Activated B cell treated with CpG ODN at 0.5 μM for 24 hours (primary cell): ENCODE measurements at regions of chr1 and their contacts with region 1.

Region 1: GRCh38 chr1:32286763-32287162 is 5.1 kb upstream of the HDAC1 start:
- DNase-seq: no peak
- ATAC-seq: no peak
- H3K4me3 Mint-ChIP-seq: no peak overlapping the region
- H3K27ac Mint-ChIP-seq: no peak overlapping the region
- H3K4me1 Mint-ChIP-seq: peaks cover 7% of the 10 kb centered on the region
- H3K27me3 Mint-ChIP-seq: no peaks in the 10 kb centered on the region
- CTCF ChIP-seq: no peak

Region 2: DNA sequence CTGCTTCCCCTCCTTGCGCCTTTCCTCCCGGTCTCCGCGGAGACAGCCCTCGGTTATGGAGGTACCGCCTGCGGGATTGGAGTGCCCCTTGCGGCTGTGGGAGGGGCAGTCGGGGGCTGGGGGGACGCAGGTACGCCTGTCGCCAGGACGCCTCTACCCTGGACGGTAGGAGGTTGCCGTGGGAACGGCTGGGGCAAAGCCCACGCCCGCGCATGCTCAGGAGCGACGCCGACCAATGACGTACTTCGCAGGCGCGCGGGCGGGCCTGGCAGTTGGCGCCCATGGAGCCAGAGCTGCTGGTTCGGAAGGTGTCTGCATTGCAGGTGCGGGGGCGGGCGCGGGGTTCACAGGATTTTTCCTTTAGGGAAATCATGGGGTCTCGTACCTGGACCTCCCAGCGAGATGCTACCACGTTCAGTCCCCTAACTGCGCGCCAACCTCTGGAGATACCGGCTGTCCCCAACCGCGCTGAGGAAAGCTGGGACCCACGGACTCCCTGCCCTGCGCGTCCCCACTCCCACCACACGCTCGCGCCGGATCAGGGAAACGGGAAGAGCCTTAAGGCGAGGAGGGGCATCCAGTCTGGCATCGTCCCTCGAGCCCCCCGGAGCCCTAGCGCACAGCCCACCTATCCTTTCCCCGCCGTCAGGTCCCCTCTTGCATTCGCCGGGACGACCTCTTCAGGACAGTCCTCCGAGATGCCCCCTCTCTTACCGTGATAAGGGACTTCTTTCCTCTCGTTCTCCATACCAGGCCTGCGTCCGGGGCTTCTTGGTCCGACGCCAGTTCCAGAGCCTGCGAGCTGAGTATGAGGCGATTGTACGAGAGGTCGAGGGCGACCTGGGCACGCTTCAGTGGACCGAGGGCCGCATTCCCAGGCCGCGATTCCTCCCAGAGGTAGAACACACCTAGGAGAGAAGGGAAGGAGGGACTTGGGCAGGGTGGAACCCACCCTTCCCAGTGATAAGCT is 81.1 kb before region 1 on chr1 and contains the start of gene IQCC:
- CTCF ChIA-PET with region 1: no interaction called
- POLR2A ChIA-PET with region 1: interaction called, 10 read pairs
- intact Hi-C with region 1: loop called (anchors 5 kb)
- DNase-seq: peak; percentile 76
- ATAC-seq: peak; percentile 45
- H3K4me3 Mint-ChIP-seq: peak within 1 kb of the TSS; percentile 85
- H3K27ac Mint-ChIP-seq: peak within 1 kb of the TSS; percentile 41
- H3K4me1 Mint-ChIP-seq: peaks cover 74% of the 10 kb centered on the region
- H3K27me3 Mint-ChIP-seq: no peaks in the 10 kb centered on the region
- CTCF ChIP-seq: no peak
- total RNA-seq, gene IQCC: 3.5 and 4.2 TPM in 2 replicates